ENCODE measurements at regions of chr6 and their contacts with region 1.

Region 1: GRCh38 chr6:132259070-132259469 is 142.2 kb downstream of the MOXD1 start:
- DNase-seq: no peak
- H3K4me3 ChIP-seq: no peak overlapping the region
- H3K27ac ChIP-seq: no peak overlapping the region
- H3K4me1 ChIP-seq: no peaks in the 10 kb centered on the region
- H3K27me3 ChIP-seq: no peaks in the 10 kb centered on the region
- CTCF ChIP-seq: no peak
- POLR2A ChIP-seq: no peak

Region 2: DNA sequence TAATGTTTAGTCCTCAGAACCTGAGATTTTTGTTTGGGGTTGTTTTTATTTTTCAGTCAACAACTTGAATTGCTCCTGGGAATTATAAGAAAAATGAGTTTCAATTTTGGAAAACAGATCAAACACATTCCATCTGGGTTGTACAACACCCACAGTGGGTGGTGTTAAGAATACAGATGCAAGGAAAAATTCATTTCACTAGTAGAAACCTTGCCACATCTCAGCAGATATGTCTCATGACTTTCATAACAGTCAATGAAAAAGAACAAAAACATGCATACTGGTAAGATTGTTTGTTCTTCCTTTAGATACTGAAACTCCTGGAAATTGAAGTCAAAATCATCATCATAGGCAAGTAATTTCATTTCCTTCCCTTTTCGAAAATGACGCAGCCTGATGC is 63.3 kb after region 1 on chr6:
- intact Hi-C with region 1: no loop called
- DNase-seq: no peak
- H3K4me3 ChIP-seq: no peak overlapping the region
- H3K27ac ChIP-seq: no peak overlapping the region
- H3K4me1 ChIP-seq: no peaks in the 10 kb centered on the region
- H3K27me3 ChIP-seq: no peaks in the 10 kb centered on the region
- CTCF ChIP-seq: no peak
- POLR2A ChIP-seq: no peak

Region 3: DNA sequence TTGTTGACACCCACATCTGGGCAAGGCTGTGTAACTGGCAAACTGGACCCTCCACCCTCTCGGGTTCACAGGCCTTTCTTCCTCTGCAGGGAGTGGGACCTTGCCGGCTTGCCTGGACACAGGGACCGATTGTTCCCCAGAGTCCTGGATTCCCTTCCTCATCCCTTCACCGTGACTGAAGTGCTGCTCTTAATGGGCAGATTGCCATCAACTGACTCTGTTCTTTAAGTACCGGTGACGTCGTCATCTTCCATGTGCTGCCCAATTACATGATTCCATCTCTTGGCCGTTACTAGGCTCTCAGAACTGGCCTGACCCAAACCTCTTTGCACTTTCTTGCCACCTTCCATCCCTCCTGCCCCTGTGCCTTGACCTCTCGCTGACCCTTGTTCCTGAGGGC is 1067.5 kb after region 1 on chr6:
- intact Hi-C with region 1: loop called (anchors 5 kb)
- DNase-seq: no peak
- H3K4me3 ChIP-seq: no peak overlapping the region
- H3K27ac ChIP-seq: no peak overlapping the region
- H3K4me1 ChIP-seq: no peaks in the 10 kb centered on the region
- H3K27me3 ChIP-seq: no peaks in the 10 kb centered on the region
- CTCF ChIP-seq: no peak
- POLR2A ChIP-seq: no peak